ENCODE measurements at regions of chr12 and their contacts with region 1.

Region 1: GRCh38 chr12:109982210-109982609 is 14.0 kb downstream of the GIT2 start:
- DNase-seq: no peak
- ATAC-seq: no peak
- H3K4me3 Mint-ChIP-seq: no peak overlapping the region
- H3K27ac Mint-ChIP-seq: peak overlapping the region; percentile 85
- H3K4me1 Mint-ChIP-seq: peaks cover 56% of the 10 kb centered on the region
- H3K27me3 Mint-ChIP-seq: no peaks in the 10 kb centered on the region
- CTCF ChIP-seq: no peak

Region 2: DNA sequence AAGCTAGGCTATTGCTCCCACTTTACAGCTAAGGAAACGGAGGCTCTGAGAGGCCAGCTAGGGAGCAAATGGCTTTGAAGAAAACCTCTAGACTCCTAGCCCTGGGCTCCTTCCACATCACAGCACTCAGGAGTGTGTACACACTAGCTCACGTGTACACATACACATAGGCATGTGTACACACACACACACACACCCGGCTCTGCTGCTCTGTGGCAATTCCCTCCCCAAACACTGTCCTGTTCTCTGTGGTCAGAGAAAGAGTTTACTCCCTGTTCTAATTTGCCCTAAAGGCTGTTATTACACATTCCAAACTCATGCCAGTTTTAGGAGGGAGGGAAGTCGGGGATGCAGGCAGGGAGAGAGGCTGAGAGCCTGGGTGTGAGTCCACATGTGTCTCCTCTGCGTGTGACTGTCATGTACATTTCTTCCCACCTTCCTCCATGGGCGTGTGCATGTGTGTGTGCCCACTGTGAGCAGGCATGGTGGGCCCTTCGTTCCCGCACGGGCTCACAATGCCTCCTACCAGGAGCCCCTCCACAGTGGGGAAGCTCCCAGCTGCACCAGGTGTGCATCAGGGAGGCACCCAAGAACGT is 163.2 kb before region 1 on chr12:
- CTCF ChIA-PET with region 1: no interaction called
- POLR2A ChIA-PET with region 1: no interaction called
- intact Hi-C with region 1: no loop called
- DNase-seq: no peak
- ATAC-seq: no peak
- H3K4me3 Mint-ChIP-seq: no peak overlapping the region
- H3K27ac Mint-ChIP-seq: no peak overlapping the region
- H3K4me1 Mint-ChIP-seq: no peaks in the 10 kb centered on the region
- H3K27me3 Mint-ChIP-seq: peaks cover 1% of the 10 kb centered on the region
- CTCF ChIP-seq: no peak

Region 3: GRCh38 chr12:109961201-109961600 is 21.0 kb before region 1 on chr12:
- CTCF ChIA-PET with region 1: no interaction called
- POLR2A ChIA-PET with region 1: no interaction called
- intact Hi-C with region 1: no loop called
- DNase-seq: no peak
- ATAC-seq: no peak
- H3K4me3 Mint-ChIP-seq: no peak overlapping the region
- H3K27ac Mint-ChIP-seq: no peak overlapping the region
- H3K4me1 Mint-ChIP-seq: no peaks in the 10 kb centered on the region
- H3K27me3 Mint-ChIP-seq: no peaks in the 10 kb centered on the region
- CTCF ChIP-seq: no peak

Region 4: GRCh38 chr12:109995686-109996482 is 13.7 kb after region 1 on chr12 and contains the start of gene GIT2:
- CTCF ChIA-PET with region 1: interaction called, 4 read pairs
- POLR2A ChIA-PET with region 1: interaction called, 20 read pairs
- intact Hi-C with region 1: no loop called
- DNase-seq: peak; percentile 96
- ATAC-seq: peak; percentile 83
- H3K4me3 Mint-ChIP-seq: peak within 1 kb of the TSS; percentile 89
- H3K27ac Mint-ChIP-seq: peak within 1 kb of the TSS; percentile 93
- H3K4me1 Mint-ChIP-seq: peaks cover 54% of the 10 kb centered on the region
- H3K27me3 Mint-ChIP-seq: no peaks in the 10 kb centered on the region
- CTCF ChIP-seq: no peak
- total RNA-seq, gene GIT2: 49.2 to 49.6 TPM

Region 5: DNA sequence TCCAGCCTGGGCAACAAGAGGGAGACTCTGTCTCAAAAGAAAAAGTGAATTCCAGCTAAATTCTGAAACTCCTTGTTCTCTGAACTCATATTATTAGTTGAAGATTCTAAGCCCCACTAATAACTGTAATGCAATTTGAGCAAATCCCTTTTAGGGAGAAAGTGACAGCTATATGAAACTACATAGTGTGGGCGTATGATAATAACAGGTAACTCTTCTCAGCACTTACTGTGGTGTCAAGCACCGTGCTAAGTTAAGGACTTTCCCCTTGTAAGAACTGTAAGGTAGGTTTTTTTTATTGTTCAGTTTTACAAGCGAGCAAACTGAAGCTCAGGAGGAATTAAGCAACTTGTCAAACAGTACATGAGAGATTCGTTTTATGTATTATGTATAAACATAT is 22.4 kb after region 1 on chr12:
- CTCF ChIA-PET with region 1: interaction called, 3 read pairs
- POLR2A ChIA-PET with region 1: interaction called, 20 read pairs
- intact Hi-C with region 1: no loop called
- DNase-seq: no peak
- ATAC-seq: peak; percentile 74
- H3K4me3 Mint-ChIP-seq: peak overlapping the region; percentile 15
- H3K27ac Mint-ChIP-seq: peak overlapping the region; percentile 15
- H3K4me1 Mint-ChIP-seq: peaks cover 74% of the 10 kb centered on the region
- H3K27me3 Mint-ChIP-seq: no peaks in the 10 kb centered on the region
- CTCF ChIP-seq: no peak

Region 6: GRCh38 chr12:110073049-110073831 is 91.0 kb after region 1 on chr12:
- CTCF ChIA-PET with region 1: no interaction called
- POLR2A ChIA-PET with region 1: no interaction called
- intact Hi-C with region 1: no loop called
- DNase-seq: peak; percentile 57
- ATAC-seq: peak; percentile 66
- H3K4me3 Mint-ChIP-seq: peak overlapping the region; percentile 76
- H3K27ac Mint-ChIP-seq: peak overlapping the region; percentile 78
- H3K4me1 Mint-ChIP-seq: peaks cover 33% of the 10 kb centered on the region
- H3K27me3 Mint-ChIP-seq: no peaks in the 10 kb centered on the region
- CTCF ChIP-seq: no peak

Measured in activated CD8-positive, alpha-beta T cell treated with anti-CD3 and anti-CD28 coated beads for 36 hours (primary cell).